A673 (cell line): ENCODE measurements at regions of chr6 and their contacts with region 1.

Region 1: GRCh38 chr6:37566111-37566949 is 66.6 kb upstream of the CCDC167 start:
- DNase-seq: peak; percentile 54
- H3K4me3 ChIP-seq: peak overlapping the region; percentile 38
- H3K27ac ChIP-seq: no peak overlapping the region
- H3K4me1 ChIP-seq: peaks cover 9% of the 10 kb centered on the region
- H3K27me3 ChIP-seq: peaks cover 3% of the 10 kb centered on the region
- CTCF ChIP-seq: peak; percentile 94

Region 2: GRCh38 chr6:37222125-37222967 is 344.0 kb before region 1 on chr6:
- CTCF ChIA-PET with region 1: no interaction called
- POLR2A ChIA-PET with region 1: no interaction called
- intact Hi-C with region 1: no loop called
- DNase-seq: peak; percentile 97
- H3K4me3 ChIP-seq: peak overlapping the region; percentile 59
- H3K27ac ChIP-seq: peak overlapping the region; percentile 27
- H3K4me1 ChIP-seq: peaks cover 18% of the 10 kb centered on the region
- H3K27me3 ChIP-seq: no peaks in the 10 kb centered on the region
- CTCF ChIP-seq: no peak

Region 3: DNA sequence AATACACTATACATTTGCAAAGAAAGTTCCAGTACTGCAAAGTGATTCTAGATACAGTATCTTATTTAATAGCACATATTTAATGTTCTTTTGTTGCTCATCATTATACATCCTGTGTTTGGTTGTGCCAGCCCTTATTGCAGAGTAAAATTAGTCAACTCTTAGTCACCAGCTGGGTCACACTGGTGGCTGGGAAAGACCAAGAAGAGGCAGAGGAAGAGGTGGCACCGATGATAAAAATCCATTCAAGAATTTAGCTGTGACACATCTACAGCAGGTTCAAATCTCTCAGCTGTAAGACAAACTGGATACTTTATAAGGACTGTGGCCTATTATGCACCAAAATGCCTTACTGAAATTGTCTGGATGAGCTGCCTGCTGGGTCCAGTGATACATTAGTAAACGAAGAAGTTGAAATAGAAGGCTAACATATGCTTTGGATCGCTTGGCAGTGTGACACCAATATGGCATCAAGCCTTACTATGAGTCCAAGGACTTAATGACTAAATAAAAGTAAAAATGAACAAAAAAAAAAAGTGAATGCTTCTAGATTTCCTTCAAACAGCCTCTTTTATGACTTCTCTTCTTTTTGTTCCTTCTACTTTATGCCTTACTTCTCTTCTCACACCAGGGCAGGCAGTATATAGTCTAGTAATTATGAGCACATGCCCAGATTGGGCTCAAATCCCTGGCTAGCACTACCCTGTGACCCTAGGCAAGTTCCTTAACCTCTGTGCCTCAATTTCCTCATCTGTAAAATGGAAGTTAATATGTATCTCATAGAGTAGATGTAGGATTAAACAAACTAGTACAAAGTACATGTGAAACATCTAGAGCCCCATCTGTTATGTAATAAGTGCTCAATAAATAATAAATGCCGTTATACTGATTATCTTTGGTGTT is 241.9 kb before region 1 on chr6:
- CTCF ChIA-PET with region 1: interaction called, 7 read pairs
- POLR2A ChIA-PET with region 1: no interaction called
- intact Hi-C with region 1: loop called (anchors 2 kb)
- DNase-seq: no peak
- H3K4me3 ChIP-seq: no peak overlapping the region
- H3K27ac ChIP-seq: no peak overlapping the region
- H3K4me1 ChIP-seq: peaks cover 10% of the 10 kb centered on the region
- H3K27me3 ChIP-seq: no peaks in the 10 kb centered on the region
- CTCF ChIP-seq: no peak

Region 4: DNA sequence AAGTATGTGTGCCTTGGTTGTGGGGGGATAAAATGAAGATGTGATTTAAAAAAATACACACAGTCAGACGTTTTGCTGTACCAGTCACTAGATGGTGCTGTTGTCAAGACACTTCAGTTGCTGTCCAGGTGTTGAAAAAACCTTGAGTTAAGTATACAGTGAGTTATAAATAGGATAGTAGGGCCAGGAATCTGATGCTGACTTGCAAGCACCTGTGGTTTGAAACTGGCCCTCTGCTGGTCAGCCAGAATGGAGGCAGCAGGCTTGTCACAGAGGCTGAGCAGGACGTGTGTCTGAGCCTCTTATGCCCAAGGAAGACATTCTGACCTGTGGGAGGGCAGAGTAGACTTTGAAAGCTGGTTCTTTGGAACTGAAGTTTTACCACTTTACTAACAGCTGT is 184.8 kb before region 1 on chr6:
- CTCF ChIA-PET with region 1: no interaction called
- POLR2A ChIA-PET with region 1: no interaction called
- intact Hi-C with region 1: loop called (anchors 10 kb)
- DNase-seq: peak; percentile 51
- H3K4me3 ChIP-seq: no peak overlapping the region
- H3K27ac ChIP-seq: no peak overlapping the region
- H3K4me1 ChIP-seq: no peaks in the 10 kb centered on the region
- H3K27me3 ChIP-seq: no peaks in the 10 kb centered on the region
- CTCF ChIP-seq: peak; percentile 65

Region 5: GRCh38 chr6:37483917-37484785 is 82.2 kb before region 1 on chr6:
- CTCF ChIA-PET with region 1: no interaction called
- POLR2A ChIA-PET with region 1: no interaction called
- intact Hi-C with region 1: loop called (anchors 2 kb)
- DNase-seq: peak; percentile 62
- H3K4me3 ChIP-seq: no peak overlapping the region
- H3K27ac ChIP-seq: no peak overlapping the region
- H3K4me1 ChIP-seq: peaks cover 4% of the 10 kb centered on the region
- H3K27me3 ChIP-seq: no peaks in the 10 kb centered on the region
- CTCF ChIP-seq: peak; percentile 81

Region 6: DNA sequence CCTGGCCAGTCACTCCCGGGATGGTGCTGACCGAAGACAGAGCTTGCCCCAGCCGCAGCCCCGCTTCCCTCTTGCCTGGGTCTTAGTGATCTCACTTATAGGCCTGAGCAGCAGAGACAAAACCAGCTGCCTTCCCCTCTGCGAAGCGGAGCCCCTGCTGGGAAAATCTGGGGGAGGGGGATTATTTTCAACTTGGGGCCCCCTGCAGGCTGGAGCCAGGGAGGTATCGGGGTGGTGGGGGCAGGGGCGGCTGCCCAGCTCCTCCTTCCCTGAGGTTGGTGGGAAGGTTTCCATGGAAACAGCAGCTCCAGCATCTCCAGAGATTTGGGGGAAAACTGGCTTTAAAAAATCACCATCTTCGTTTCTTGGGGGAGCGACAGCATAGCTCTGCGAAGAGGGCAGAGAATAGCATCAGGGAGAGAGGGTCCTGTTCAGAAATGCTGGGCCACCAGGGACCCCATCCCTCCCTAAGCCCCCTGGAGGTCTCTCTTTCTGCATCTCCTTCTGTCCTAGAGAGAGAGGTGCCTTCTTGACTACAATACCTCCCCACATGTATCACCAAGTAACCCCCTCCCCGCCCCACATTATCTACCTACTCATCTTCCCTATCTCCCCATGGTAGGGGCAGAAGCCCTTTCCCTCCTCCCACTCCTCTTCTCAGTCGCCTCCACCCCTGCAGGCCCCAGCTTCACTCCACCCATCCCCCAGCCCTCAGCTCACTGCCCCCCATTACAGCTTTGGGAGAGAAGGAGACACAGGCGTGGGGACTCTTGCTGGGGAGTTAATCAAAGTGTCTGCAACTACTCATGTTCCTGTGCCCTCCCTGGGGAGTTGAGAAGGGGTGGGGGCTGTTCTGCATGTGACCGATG is 21.8 kb after region 1 on chr6:
- CTCF ChIA-PET with region 1: no interaction called
- POLR2A ChIA-PET with region 1: no interaction called
- intact Hi-C with region 1: no loop called
- DNase-seq: peak; percentile 19
- H3K4me3 ChIP-seq: no peak overlapping the region
- H3K27ac ChIP-seq: no peak overlapping the region
- H3K4me1 ChIP-seq: no peaks in the 10 kb centered on the region
- H3K27me3 ChIP-seq: no peaks in the 10 kb centered on the region
- CTCF ChIP-seq: no peak